Activated B cell treated with CpG ODN at 0.5 μM for 24 hours (primary cell): ENCODE measurements at regions of chr14 and their contacts with region 1.

Region 1: GRCh38 chr14:60893911-60894310 is 87.0 kb downstream of the TRMT5 start:
- DNase-seq: no peak
- ATAC-seq: no peak
- H3K4me3 Mint-ChIP-seq: no peak overlapping the region
- H3K27ac Mint-ChIP-seq: no peak overlapping the region
- H3K4me1 Mint-ChIP-seq: peaks cover 6% of the 10 kb centered on the region
- H3K27me3 Mint-ChIP-seq: no peaks in the 10 kb centered on the region
- CTCF ChIP-seq: no peak

Region 2: GRCh38 chr14:60878536-60878935 is 15.4 kb before region 1 on chr14:
- CTCF ChIA-PET with region 1: no interaction called
- POLR2A ChIA-PET with region 1: no interaction called
- intact Hi-C with region 1: loop called (anchors 2 kb)
- DNase-seq: no peak
- ATAC-seq: no peak
- H3K4me3 Mint-ChIP-seq: no peak overlapping the region
- H3K27ac Mint-ChIP-seq: no peak overlapping the region
- H3K4me1 Mint-ChIP-seq: no peaks in the 10 kb centered on the region
- H3K27me3 Mint-ChIP-seq: no peaks in the 10 kb centered on the region
- CTCF ChIP-seq: no peak

Region 3: DNA sequence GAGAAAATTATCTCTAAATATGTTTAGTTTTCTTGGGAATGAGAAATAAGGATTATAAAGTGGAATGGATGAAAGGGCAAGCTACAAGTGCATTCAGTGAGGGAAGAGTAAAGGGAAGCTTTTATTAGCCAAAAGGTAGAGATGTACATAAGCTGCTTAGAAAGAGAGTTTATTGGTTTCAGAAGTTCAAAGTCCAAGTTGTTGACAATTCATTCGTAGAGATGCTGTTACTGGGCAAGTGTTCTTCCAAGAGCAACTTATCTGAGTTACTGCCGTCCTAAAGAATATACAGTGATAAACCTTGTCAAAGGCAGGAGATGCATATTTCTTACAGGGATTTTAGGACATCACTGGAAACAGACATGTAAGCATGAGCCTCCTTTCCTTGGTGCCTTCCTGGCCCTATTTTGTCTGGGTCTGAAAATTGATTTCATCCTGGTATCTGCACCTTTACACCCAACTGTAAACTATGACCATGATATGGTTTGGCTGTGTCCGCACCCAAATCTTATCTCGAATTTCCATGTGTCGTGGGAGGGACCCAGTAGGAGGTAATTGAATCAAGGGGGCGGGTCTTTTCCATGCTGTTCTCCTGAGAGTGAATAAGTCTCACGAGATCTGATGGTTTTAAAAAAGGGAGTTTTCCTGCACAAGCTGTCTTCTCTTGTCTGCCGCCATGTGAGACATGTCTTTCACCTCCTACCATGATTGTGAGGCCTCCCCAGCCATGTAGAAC is 40.2 kb after region 1 on chr14:
- CTCF ChIA-PET with region 1: no interaction called
- POLR2A ChIA-PET with region 1: no interaction called
- intact Hi-C with region 1: no loop called
- DNase-seq: no peak
- ATAC-seq: no peak
- H3K4me3 Mint-ChIP-seq: no peak overlapping the region
- H3K27ac Mint-ChIP-seq: no peak overlapping the region
- H3K4me1 Mint-ChIP-seq: no peaks in the 10 kb centered on the region
- H3K27me3 Mint-ChIP-seq: no peaks in the 10 kb centered on the region
- CTCF ChIP-seq: no peak

Region 4: GRCh38 chr14:61355892-61356325 is 462.0 kb after region 1 on chr14:
- CTCF ChIA-PET with region 1: no interaction called
- POLR2A ChIA-PET with region 1: no interaction called
- intact Hi-C with region 1: no loop called
- DNase-seq: no peak
- ATAC-seq: no peak
- H3K4me3 Mint-ChIP-seq: no peak overlapping the region
- H3K27ac Mint-ChIP-seq: no peak overlapping the region
- H3K4me1 Mint-ChIP-seq: peaks cover 9% of the 10 kb centered on the region
- H3K27me3 Mint-ChIP-seq: no peaks in the 10 kb centered on the region
- CTCF ChIP-seq: no peak

Region 5: DNA sequence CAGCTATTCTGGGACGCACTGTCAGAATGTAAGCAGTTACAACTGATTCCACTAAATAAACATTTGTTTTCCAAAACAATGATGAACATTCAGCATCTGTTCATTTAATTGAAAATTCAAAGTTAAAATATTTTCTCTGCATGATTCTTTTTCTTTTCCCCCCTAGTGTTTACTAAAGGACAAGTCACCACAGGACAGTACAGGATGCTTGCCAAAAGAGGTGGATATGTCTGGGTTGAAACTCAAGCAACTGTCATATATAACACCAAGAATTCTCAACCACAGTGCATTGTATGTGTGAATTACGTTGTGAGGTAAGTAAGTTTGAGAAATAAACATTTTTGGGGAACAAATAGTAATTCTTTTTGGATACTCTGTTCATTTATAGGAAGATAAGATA is 840.1 kb after region 1 on chr14:
- CTCF ChIA-PET with region 1: no interaction called
- POLR2A ChIA-PET with region 1: no interaction called
- intact Hi-C with region 1: no loop called
- DNase-seq: no peak
- ATAC-seq: no peak
- H3K4me3 Mint-ChIP-seq: no peak overlapping the region
- H3K27ac Mint-ChIP-seq: no peak overlapping the region
- H3K4me1 Mint-ChIP-seq: peaks cover 28% of the 10 kb centered on the region
- H3K27me3 Mint-ChIP-seq: no peaks in the 10 kb centered on the region
- CTCF ChIP-seq: no peak